ENCODE measurements at regions of chr1 and their contacts with region 1.

Region 1: DNA sequence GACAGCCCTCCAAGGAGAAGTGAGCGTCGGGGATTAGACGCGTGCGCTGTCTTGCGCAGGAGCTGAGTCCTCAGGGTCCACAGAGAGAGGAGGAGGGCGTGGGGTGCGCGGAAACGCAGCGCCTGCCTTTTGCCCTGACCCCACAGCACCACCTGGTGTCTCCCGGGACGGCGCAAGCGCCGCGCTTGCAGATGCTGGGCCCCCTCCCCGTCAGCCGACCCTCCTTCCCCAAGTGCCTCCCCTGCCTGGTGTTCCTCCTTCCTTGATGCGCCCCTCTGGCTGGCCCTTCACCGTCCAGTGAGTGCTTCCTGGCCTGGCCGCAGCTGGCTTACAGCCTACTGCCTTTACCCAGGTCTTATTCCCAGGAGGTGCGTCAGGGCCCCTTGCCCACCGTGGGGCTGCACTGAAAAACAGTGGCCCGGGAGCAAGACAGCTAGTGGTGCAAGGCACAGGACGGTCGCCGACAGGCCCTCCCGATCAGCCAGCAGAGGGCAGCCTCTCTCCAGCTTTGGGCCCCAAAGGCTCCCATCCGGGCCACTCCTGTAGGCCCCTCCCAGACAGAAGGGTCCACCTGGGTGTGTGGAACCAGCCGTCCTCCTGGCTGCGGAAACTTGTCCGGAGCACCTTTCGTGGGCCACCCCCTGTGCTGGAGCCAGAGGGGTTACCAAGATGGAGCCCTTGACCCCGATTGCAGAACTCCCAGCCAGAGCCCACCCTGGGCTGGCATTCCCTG is 12.9 kb upstream of the PHLDA3 start:
- DNase-seq: peak; percentile 87
- ATAC-seq: peak; percentile 90
- H3K4me3 Mint-ChIP-seq: peak overlapping the region; percentile 57
- H3K27ac Mint-ChIP-seq: no peak overlapping the region
- H3K4me1 Mint-ChIP-seq: peaks cover 14% of the 10 kb centered on the region
- H3K27me3 Mint-ChIP-seq: peaks cover 22% of the 10 kb centered on the region
- CTCF ChIP-seq: peak; percentile 82

Region 2: DNA sequence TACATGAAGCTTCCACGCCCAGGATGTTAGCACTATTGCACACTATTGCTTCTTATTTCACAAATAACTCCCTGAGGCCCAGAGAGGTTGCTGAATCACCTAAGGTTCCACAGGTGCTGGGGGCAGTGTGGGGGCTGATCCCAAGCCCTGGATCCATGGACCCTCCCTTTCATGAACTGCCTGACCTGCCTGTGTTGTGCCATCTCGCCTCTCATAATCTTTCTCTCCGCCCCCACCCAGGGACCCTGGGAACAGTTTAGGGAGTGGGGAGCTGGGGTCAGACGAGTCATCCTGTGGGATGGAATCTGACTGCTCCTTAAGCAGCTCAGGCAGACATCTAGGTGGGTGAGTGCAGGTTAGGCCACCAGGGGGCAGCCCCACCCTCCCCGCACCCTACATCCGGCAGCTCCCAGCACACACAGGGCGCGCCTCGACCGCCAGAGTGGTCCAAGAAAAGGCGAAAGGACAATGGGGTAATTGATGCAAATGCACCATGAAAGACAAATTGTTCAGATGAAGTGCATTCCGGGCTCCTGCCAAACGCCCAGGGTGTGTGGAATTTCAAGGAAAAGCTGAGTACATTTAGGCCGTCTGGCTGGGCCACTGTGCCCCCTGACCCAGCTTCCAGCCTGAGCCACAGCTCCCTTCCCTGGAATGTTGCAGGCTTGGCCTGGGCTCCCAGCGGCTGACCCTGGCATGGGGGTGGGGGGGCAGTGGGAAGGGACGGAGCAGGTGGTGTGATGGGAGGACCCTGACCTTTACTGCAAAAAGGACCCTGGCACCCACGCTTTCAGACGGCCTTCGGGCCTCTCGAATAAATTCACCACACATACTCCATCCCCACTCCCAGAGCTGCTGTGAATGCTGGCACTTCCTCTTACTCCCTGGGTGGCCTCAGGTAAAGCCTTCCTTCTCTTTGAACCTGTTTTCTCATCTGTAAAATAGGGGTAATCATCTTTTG is 33.7 kb before region 1 on chr1:
- CTCF ChIA-PET with region 1: interaction called, 149 read pairs
- POLR2A ChIA-PET with region 1: no interaction called
- intact Hi-C with region 1: loop called (anchors 5 kb)
- DNase-seq: peak; percentile 84
- ATAC-seq: peak; percentile 98
- H3K4me3 Mint-ChIP-seq: no peak overlapping the region
- H3K27ac Mint-ChIP-seq: no peak overlapping the region
- H3K4me1 Mint-ChIP-seq: peaks cover 8% of the 10 kb centered on the region
- H3K27me3 Mint-ChIP-seq: peaks cover 16% of the 10 kb centered on the region
- CTCF ChIP-seq: peak; percentile 72

Region 3: DNA sequence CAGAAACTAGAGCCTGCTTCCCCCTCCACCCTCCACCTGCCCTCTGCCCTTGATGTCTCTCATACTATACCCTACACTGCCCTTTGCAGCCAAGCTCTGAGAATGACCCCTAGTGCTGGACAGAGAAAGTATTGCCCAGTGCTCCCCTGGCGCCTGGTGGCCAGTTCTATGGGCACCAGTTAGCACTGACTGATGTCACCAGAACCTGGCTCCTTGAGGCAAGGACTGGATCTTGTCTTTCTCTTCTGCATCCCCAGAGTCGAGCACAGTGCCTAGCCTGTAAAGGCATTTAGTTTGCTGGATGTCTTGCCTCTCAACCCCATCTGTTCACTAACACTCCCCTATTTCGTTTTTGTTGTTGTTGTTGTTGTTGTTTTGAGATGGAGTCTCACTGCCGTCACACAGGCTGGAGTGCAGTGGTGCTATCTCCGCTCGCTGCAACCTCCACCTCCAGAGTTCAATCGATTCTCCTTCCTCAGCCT is 18.8 kb before region 1 on chr1:
- CTCF ChIA-PET with region 1: interaction called, 13 read pairs
- POLR2A ChIA-PET with region 1: no interaction called
- intact Hi-C with region 1: no loop called
- DNase-seq: no peak
- ATAC-seq: no peak
- H3K4me3 Mint-ChIP-seq: no peak overlapping the region
- H3K27ac Mint-ChIP-seq: no peak overlapping the region
- H3K4me1 Mint-ChIP-seq: no peaks in the 10 kb centered on the region
- H3K27me3 Mint-ChIP-seq: peaks cover 11% of the 10 kb centered on the region
- CTCF ChIP-seq: no peak

Region 4: DNA sequence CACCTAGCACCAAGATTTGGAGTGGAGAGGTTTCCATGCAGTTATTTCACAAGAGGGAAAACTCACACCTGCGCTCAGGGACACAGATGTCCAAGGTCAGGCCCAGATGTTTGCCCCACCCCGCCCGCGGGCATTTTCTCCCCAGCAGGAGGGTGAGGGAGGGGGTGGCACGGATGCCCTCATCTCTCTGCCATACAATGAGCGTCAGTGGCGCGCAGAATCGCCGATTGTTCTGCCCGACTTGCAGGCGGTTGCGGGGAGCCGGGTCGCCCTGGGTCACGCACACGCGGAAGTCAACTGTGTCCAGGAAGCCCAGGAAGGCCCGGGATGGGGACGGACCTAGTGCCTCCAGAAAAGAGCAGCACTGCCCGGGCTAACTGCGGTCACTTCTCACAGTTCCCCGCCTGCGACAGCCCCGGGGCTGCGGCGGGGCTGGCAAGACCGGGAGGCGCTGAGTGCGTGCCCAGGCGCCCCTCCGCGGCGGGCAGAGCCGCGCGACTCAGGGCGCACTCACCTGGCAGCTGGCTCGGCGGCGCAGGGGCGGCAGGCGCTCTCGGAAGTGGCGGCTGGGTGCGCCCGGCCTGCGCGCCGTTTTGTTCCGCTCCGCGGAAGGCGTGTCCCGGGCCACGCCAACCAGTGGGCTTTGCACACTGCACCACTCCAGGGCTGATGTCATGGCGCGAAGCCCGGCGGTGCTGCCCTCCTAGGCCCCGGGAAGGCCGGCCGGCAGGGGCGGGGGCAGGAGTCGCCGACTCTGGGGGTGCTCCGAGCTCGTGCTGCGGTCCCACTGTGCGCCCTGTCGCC is 24.8 kb after region 1 on chr1 and contains the start of gene CSRP1:
- CTCF ChIA-PET with region 1: interaction called, 796 read pairs
- POLR2A ChIA-PET with region 1: interaction called, 7 read pairs
- intact Hi-C with region 1: no loop called
- DNase-seq: peak; percentile 89
- ATAC-seq: peak; percentile 97
- H3K4me3 Mint-ChIP-seq: peak within 1 kb of the TSS; percentile 92
- H3K27ac Mint-ChIP-seq: peak within 1 kb of the TSS; percentile 92
- H3K4me1 Mint-ChIP-seq: peaks cover 33% of the 10 kb centered on the region
- H3K27me3 Mint-ChIP-seq: no peaks in the 10 kb centered on the region
- CTCF ChIP-seq: no peak
- total RNA-seq, gene CSRP1: 55.3 to 56.2 TPM

Region 5: DNA sequence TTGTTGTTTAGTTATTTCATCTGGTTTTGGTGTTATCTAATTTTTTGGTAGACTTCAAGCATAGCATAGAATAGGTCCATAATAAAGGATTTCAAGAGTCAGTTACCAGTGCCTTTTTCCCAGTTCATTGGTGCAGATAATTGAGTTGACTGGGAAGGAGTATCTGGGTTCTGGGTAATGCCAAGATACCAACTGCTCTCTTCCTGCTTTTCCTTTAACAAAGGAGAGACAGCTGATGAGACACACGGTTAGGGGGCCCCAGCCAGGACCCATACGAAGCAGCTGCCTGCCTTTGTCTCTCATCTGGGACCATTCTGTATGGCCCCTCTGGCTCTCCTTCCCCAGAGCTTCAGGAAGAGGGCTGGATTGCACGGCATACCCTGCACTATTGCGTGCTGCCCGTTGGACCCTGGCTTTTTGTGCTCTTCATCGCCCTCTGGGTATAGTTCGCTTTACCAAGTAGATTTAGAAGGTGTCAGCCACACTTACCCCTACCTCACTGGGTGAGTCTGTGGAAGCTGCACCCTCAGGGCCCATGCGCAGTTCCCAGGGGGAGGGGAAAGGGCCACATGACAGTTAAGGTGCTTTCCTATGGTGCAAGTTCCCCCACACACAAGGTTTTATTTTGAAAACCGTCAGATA is 64.0 kb after region 1 on chr1:
- CTCF ChIA-PET with region 1: interaction called, 10 read pairs
- POLR2A ChIA-PET with region 1: no interaction called
- intact Hi-C with region 1: no loop called
- DNase-seq: no peak
- ATAC-seq: peak; percentile 51
- H3K4me3 Mint-ChIP-seq: no peak overlapping the region
- H3K27ac Mint-ChIP-seq: no peak overlapping the region
- H3K4me1 Mint-ChIP-seq: no peaks in the 10 kb centered on the region
- H3K27me3 Mint-ChIP-seq: peaks cover 10% of the 10 kb centered on the region
- CTCF ChIP-seq: no peak

Region 6: GRCh38 chr1:201637680-201638079 is 155.8 kb after region 1 on chr1:
- CTCF ChIA-PET with region 1: no interaction called
- POLR2A ChIA-PET with region 1: no interaction called
- intact Hi-C with region 1: no loop called
- DNase-seq: no peak
- ATAC-seq: no peak
- H3K4me3 Mint-ChIP-seq: no peak overlapping the region
- H3K27ac Mint-ChIP-seq: no peak overlapping the region
- H3K4me1 Mint-ChIP-seq: no peaks in the 10 kb centered on the region
- H3K27me3 Mint-ChIP-seq: no peaks in the 10 kb centered on the region
- CTCF ChIP-seq: no peak